H1 (cell line): ENCODE measurements at regions of chr16 and their contacts with region 1.

Region 1: GRCh38 chr16:16881814-16882213 is 502.9 kb downstream of the NPIPA7 start:
- DNase-seq: peak in 1 of 2 experiments; percentile 46
- H3K4me3 ChIP-seq: no peak overlapping the region
- H3K27ac ChIP-seq: no peak overlapping the region
- H3K4me1 ChIP-seq: peaks cover 0 to 6% (median 4%) of the 10 kb centered on the region in 4 experiments; a peak in 4 of 7 replicates
- H3K27me3 ChIP-seq: no peaks in the 10 kb centered on the region
- CTCF ChIP-seq: peak; percentile 18 to 64 (median 37)
- EP300 ChIP-seq: no peak
- POLR2A ChIP-seq: no peak
- RAD21 ChIP-seq: peak; percentile 62 to 69

Region 2: GRCh38 chr16:16861546-16861945 is 20.3 kb before region 1 on chr16:
- CTCF ChIA-PET with region 1: interaction called, 44 read pairs
- POLR2A ChIA-PET with region 1: no interaction called
- DNase-seq: peak in 1 of 2 experiments; percentile 67
- H3K4me3 ChIP-seq: no peak overlapping the region
- H3K27ac ChIP-seq: no peak overlapping the region
- H3K4me1 ChIP-seq: peaks cover 0 to 4% (median 0%) of the 10 kb centered on the region in 4 experiments; a peak in 1 of 7 replicates
- H3K27me3 ChIP-seq: no peaks in the 10 kb centered on the region
- CTCF ChIP-seq: peak; percentile 69 to 78 (median 73)
- EP300 ChIP-seq: no peak
- POLR2A ChIP-seq: no peak
- RAD21 ChIP-seq: peak; percentile 83 to 85

Region 3: GRCh38 chr16:16871196-16871595 is 10.6 kb before region 1 on chr16:
- CTCF ChIA-PET with region 1: interaction called, 20 read pairs
- POLR2A ChIA-PET with region 1: no interaction called
- DNase-seq: peak in 1 of 2 experiments; percentile 49
- H3K4me3 ChIP-seq: no peak overlapping the region
- H3K27ac ChIP-seq: no peak overlapping the region
- H3K4me1 ChIP-seq: peaks cover 6 to 16% (median 11%) of the 10 kb centered on the region in 4 experiments
- H3K27me3 ChIP-seq: no peaks in the 10 kb centered on the region
- CTCF ChIP-seq: peak; percentile 16 to 65 (median 45); a peak in 3 of 4 replicates
- EP300 ChIP-seq: no peak
- POLR2A ChIP-seq: no peak
- RAD21 ChIP-seq: peak; percentile 57 to 60; a peak in 3 of 4 replicates

Region 4: DNA sequence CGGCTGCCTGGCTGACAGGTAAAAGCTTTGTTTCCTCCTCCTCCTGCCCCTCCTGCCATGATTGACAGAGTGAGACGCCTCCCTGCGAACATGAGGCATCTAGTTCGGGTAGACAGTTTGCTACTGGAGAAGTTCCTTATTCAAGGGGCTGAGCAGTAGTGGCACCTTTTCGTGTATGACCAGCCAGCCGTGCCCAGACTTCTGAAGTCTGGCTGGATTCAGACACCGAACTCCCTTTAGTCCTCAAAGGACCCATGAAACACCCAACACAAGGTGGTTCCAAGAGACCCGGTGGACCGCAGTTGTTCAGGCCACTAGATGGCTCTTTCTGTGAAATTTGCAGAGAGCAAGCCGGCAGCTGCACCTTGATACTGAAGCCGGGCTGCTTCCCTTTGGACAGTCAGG is 396.2 kb after region 1 on chr16:
- CTCF ChIA-PET with region 1: no interaction called
- POLR2A ChIA-PET with region 1: no interaction called
- DNase-seq: peak in 1 of 2 experiments; percentile 59
- H3K4me3 ChIP-seq: no peak overlapping the region
- H3K27ac ChIP-seq: no peak overlapping the region
- H3K4me1 ChIP-seq: peaks cover 0 to 5% (median 2%) of the 10 kb centered on the region in 4 experiments; a peak in 6 of 7 replicates
- H3K27me3 ChIP-seq: no peaks in the 10 kb centered on the region
- CTCF ChIP-seq: peak; percentile 52 to 67 (median 66)
- EP300 ChIP-seq: no peak
- POLR2A ChIP-seq: no peak
- RAD21 ChIP-seq: peak; percentile 51 to 75